ENCODE measurements at regions of chr19 and their contacts with region 1.

Region 1: GRCh38 chr19:34712395-34713261 is 21.4 kb upstream of the ZNF181 start:
- DNase-seq: peak; percentile 86
- H3K4me3 Mint-ChIP-seq: no peak overlapping the region
- H3K27ac Mint-ChIP-seq: no peak overlapping the region
- H3K4me1 Mint-ChIP-seq: peaks cover 6% of the 10 kb centered on the region
- H3K27me3 Mint-ChIP-seq: no peaks in the 10 kb centered on the region
- CTCF ChIP-seq: peak; percentile 68

Region 2: DNA sequence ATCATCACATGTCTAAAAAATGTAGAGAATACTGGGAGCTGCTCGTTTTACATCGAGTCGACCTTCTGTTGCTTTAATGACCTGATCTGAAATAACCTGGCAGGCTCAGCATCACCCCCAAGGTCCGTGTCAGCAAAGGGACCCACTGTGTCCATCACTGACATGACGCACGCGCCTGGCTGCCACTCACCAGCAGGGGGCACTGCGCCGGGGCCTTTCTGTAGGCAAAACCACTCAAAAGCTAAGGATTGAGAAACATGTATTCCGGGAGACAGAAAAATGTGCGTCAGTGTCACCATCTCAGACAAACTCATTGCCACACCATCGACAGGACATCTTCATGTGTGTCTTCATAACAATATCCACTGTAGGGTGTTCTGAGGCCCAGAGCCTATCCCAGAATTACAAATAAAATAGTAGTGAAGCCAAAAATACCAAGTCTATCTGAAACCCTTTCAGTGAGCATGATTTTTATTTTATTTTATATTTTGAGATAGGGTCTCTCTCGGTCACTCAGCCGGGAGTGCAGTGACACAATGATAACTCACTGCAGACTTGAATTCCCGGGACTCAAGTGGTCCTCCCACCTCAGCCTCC is 670.6 kb before region 1 on chr19:
- CTCF ChIA-PET with region 1: no interaction called
- POLR2A ChIA-PET with region 1: no interaction called
- intact Hi-C with region 1: loop called (anchors 5 kb)
- DNase-seq: peak; percentile 68
- H3K4me3 Mint-ChIP-seq: no peak overlapping the region
- H3K27ac Mint-ChIP-seq: no peak overlapping the region
- H3K4me1 Mint-ChIP-seq: no peaks in the 10 kb centered on the region
- H3K27me3 Mint-ChIP-seq: peaks cover 3% of the 10 kb centered on the region
- CTCF ChIP-seq: peak; percentile 64

Region 3: GRCh38 chr19:34501339-34502320 is 211.0 kb before region 1 on chr19:
- CTCF ChIA-PET with region 1: interaction called, 10 read pairs
- POLR2A ChIA-PET with region 1: no interaction called
- intact Hi-C with region 1: loop called (anchors 1 kb)
- DNase-seq: peak; percentile 91
- H3K4me3 Mint-ChIP-seq: no peak overlapping the region
- H3K27ac Mint-ChIP-seq: no peak overlapping the region
- H3K4me1 Mint-ChIP-seq: peaks cover 6% of the 10 kb centered on the region
- H3K27me3 Mint-ChIP-seq: no peaks in the 10 kb centered on the region
- CTCF ChIP-seq: peak; percentile 99

Region 4: DNA sequence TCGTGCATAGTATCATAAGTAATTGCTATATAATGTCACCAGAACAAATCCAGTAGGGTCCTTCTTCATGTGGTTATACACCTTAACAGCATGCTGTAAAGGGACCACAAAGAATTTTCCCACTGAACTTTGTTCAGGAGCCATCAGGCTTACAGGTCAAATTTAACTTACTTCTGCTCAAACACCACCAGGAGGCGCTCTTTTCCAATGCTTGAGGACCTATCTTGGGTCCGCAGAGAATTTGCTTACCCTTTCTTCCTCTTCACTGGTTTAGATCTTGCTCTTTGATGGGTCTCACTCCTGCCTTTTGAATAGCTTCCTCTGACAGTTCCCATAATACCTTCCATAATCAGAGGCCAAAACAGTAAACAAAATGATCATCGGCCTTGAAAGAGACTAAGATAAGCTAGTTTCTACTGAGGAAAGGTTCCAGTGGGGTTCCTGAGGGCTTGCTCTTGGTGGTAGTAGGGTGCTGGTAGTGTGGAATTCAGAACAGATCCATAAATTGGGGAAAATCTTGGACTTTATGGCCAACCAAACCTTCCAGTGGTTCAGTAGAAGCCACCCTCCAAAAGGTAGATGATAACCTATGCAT is 73.0 kb before region 1 on chr19:
- CTCF ChIA-PET with region 1: interaction called, 17 read pairs
- POLR2A ChIA-PET with region 1: no interaction called
- intact Hi-C with region 1: loop called (anchors 1 kb)
- DNase-seq: peak; percentile 83
- H3K4me3 Mint-ChIP-seq: no peak overlapping the region
- H3K27ac Mint-ChIP-seq: no peak overlapping the region
- H3K4me1 Mint-ChIP-seq: no peaks in the 10 kb centered on the region
- H3K27me3 Mint-ChIP-seq: no peaks in the 10 kb centered on the region
- CTCF ChIP-seq: peak; percentile 47

Region 5: GRCh38 chr19:34733826-34734600 is 21.4 kb after region 1 on chr19 and contains the start of gene ZNF181:
- CTCF ChIA-PET with region 1: interaction called, 10 read pairs
- POLR2A ChIA-PET with region 1: no interaction called
- intact Hi-C with region 1: no loop called
- DNase-seq: peak; percentile 91
- H3K4me3 Mint-ChIP-seq: peak within 1 kb of the TSS; percentile 86
- H3K27ac Mint-ChIP-seq: peak within 1 kb of the TSS; percentile 94
- H3K4me1 Mint-ChIP-seq: peaks cover 10% of the 10 kb centered on the region
- H3K27me3 Mint-ChIP-seq: no peaks in the 10 kb centered on the region
- CTCF ChIP-seq: no peak
- total RNA-seq, gene ZNF181: 8.1 and 9.0 TPM in 2 replicates

Region 6: DNA sequence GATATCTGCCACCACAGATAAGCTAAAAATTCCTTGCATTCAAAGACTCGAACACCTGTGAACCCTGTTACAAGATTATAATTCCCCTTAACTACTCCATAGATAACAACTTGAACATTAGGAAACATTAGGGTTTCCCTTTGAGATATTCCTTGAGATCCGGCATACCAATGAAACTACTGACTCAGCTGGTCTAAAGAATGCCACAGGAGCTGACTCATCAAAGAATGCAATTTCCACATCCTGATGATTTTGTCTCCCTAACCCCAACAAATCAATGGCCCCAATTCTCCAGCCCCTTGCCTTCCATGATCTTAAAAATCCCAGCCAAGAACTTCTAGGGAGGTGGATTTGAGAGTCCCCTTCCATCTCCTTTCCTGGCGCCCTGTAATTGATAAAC is 95.9 kb after region 1 on chr19:
- CTCF ChIA-PET with region 1: no interaction called
- POLR2A ChIA-PET with region 1: no interaction called
- intact Hi-C with region 1: no loop called
- DNase-seq: peak; percentile 41
- H3K4me3 Mint-ChIP-seq: no peak overlapping the region
- H3K27ac Mint-ChIP-seq: no peak overlapping the region
- H3K4me1 Mint-ChIP-seq: no peaks in the 10 kb centered on the region
- H3K27me3 Mint-ChIP-seq: no peaks in the 10 kb centered on the region
- CTCF ChIP-seq: no peak